ENCODE measurements at regions of chr6 and their contacts with region 1.

Region 1: DNA sequence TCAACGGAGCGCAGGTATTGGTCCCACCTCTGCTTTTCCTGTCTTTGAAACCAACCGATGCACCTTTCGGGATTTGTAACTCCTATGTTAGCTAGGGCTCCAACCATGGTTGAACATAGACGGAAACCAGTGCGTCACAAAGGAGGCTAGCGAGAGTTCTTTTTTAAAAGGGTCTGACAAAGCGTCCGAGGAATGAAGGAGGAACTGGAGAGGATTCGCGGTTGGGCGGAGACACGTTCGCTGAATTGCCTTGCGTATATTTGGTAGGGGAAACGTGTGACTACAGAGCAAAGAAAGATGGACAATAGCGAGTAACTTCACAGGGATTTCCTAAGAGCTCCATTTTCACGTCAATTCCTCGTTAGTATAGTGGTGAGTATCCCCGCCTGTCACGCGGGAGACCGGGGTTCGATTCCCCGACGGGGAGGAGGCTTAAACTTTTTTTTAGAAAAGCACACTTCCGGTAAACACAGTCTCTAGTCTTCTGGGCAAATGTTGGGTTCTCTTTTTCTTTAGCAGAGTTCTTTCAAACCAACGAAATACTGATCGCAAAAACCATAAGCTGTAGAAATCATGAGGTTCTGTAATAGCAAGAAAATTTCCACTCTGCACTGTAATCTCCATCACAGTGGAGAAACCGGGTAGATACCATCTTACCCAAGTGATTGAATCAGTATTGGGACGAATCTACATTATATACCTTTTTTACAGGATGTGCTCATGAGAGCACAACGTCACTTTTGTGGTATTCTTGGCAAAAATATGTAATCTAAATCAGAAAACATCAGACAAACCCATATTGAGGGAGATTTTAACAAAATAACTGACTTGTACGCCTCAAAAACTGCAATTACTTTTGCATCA is 6.6 kb upstream of the ZNF184 start:
- DNase-seq: peak; percentile 89
- H3K4me3 Mint-ChIP-seq: no peak overlapping the region
- H3K27ac Mint-ChIP-seq: no peak overlapping the region
- H3K4me1 Mint-ChIP-seq: peaks cover 5% of the 10 kb centered on the region
- H3K27me3 Mint-ChIP-seq: no peaks in the 10 kb centered on the region

Region 2: DNA sequence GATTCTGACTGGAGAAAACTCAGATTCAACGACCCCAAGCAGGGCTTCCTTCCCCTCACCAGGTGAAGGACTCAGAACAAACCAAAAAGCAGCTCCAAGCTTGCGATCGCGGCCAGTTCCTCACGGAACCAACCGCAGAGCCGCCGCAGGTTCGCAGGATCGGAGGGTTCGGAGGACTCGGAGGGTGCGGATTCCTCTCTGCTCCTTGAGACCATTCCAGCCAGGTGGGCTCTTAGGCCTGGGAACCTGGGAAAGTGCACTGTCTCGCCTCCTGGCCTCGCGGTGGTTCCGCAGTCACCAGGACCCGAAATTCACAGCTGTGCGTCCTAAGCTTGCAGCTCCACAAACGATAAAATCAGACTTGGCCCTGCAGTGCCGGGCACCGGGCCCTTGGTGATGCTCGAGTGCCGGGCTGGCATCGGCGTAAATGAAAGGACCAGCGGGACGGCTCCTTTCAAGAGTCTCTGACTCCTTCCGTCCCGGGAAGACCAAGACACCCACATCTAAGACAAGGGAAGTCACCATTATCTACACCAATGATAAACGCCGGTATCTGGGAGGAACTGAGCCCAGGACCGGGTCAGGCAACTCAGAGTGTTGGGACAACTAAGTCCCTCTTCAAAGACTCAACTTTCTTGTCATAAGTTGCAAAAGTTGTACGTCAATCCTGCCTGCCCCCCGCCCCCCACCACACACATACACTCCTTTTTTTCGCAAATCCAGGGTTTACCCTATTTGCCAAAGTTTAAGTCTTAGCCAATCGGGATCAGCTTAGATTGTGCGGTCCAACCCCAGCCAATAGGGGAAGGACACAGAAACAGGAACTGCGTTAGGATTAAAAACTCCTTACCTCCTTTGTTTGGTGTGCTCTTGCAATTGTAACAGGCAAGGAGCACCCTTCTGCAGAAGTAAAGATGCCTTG is 301.8 kb before region 1 on chr6:
- CTCF ChIA-PET with region 1: no interaction called
- POLR2A ChIA-PET with region 1: interaction called, 3 read pairs
- intact Hi-C with region 1: loop called (anchors 1 kb)
- DNase-seq: peak; percentile 84
- H3K4me3 Mint-ChIP-seq: peak overlapping the region; percentile 88
- H3K27ac Mint-ChIP-seq: peak overlapping the region; percentile 88
- H3K4me1 Mint-ChIP-seq: peaks cover 10% of the 10 kb centered on the region
- H3K27me3 Mint-ChIP-seq: peaks cover 1% of the 10 kb centered on the region

Region 3: DNA sequence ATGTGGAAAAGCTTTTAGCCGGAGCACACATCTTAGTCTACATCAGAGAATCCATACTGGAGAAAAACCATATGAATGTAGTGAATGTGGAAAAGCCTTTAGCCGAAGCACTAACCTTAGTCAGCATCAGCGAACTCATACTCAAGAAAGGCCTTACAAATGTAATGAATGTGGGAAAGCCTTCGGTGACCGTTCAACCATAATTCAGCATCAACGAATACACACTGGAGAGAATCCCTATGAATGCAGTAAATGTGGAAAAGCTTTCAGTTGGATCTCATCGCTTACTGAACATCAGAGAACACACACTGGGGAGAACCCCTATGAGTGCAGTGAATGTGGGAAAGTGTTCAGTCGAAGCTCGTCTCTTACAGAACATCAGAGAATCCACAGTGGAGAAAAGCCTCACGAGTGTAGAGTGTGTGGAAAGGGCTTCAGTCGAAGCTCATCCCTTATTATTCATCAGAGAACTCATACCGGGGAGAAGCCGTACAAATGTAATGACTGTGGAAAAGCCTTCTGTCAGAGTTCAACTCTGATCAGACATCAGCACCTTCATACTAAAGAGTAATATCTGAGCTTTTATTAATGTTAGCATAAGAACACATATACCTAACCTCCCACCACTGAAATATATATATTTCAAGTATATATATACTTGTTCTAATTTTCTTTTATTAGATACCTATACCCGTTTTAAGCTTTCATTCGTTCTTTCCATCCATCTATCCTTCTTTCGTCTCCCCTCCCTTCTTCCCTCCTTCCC is 78.5 kb before region 1 on chr6:
- CTCF ChIA-PET with region 1: no interaction called
- POLR2A ChIA-PET with region 1: no interaction called
- intact Hi-C with region 1: no loop called
- DNase-seq: no peak
- H3K4me3 Mint-ChIP-seq: no peak overlapping the region
- H3K27ac Mint-ChIP-seq: no peak overlapping the region
- H3K4me1 Mint-ChIP-seq: no peaks in the 10 kb centered on the region
- H3K27me3 Mint-ChIP-seq: no peaks in the 10 kb centered on the region

Region 4: GRCh38 chr6:27495386-27496135 is 16.0 kb after region 1 on chr6:
- CTCF ChIA-PET with region 1: interaction called, 5 read pairs
- POLR2A ChIA-PET with region 1: interaction called, 4 read pairs
- intact Hi-C with region 1: loop called (anchors 2 kb)
- DNase-seq: peak; percentile 87
- H3K4me3 Mint-ChIP-seq: peak overlapping the region; percentile 81
- H3K27ac Mint-ChIP-seq: peak overlapping the region; percentile 60
- H3K4me1 Mint-ChIP-seq: peaks cover 16% of the 10 kb centered on the region
- H3K27me3 Mint-ChIP-seq: peaks cover 43% of the 10 kb centered on the region

Region 5: DNA sequence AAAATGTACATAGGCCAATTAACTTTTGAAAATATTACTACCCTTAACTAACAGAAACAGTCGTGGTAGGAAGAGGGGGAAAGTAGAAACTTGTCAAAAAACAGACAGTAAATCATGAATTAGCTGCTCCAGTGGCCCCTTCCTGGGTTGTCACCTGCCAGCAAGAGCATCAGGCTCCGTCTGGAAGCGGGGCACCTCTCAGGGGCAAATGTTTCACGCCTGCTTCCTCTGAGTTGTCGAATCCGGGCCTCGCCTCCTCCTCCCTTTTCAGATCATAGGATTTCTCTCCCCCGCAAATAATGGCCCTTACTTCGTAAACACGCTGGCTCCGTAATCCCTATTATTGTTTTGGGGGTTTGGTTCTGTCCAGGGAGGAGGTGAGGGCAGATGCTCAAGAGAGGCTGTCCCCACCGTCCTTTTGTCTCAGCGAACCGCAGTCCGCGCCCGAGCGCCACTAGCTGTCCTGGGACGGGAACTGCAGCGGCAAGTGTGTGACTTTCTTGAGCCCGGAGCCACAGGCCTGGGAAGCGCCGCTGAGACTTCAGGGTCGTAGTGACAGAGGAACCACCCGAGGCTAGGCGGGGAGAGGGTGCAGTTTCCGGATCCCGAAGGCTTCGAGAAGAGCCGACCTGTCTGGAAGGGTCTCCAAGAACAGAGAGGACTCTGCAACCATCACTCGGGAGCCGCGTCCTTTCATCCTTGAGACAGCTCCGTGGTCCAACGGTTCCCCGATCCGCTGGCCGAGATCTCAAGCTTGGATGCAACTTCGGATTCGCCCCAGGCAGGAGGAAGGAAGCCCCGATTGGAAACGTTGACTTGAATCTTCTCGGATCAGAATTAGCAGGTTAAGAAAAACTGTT is 207.8 kb after region 1 on chr6:
- CTCF ChIA-PET with region 1: interaction called, 4 read pairs
- POLR2A ChIA-PET with region 1: no interaction called
- intact Hi-C with region 1: loop called (anchors 1 kb)
- DNase-seq: peak; percentile 90
- H3K4me3 Mint-ChIP-seq: peak overlapping the region; percentile 87
- H3K27ac Mint-ChIP-seq: peak overlapping the region; percentile 84
- H3K4me1 Mint-ChIP-seq: peaks cover 14% of the 10 kb centered on the region
- H3K27me3 Mint-ChIP-seq: peaks cover 15% of the 10 kb centered on the region

Region 6: DNA sequence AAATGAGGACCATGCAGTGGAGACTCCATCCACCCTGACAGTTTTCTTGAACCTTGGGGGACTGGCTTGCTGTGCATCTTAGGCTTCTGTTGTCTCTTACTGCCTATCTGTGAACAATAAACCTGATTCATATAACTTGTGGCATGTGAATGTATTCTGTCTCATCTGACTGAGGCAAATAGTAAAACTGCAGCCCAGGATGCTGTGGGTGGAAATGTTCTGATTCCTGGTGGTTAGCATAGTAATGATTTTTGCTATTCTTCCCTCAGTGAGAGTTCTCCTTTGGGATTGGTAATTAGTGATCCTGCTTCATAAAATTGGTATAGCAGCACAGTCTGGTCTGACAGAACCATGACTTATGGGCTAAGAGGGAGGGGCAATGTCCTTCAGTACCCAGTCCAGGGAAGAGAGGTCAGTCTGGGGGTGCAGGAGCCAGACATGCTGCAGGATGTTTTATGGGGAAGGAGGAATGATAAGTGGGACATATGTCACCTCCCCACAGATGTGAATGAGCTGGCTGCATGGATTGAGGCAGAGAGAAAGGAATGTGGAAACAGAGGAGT is 285.6 kb after region 1 on chr6:
- CTCF ChIA-PET with region 1: no interaction called
- POLR2A ChIA-PET with region 1: no interaction called
- intact Hi-C with region 1: no loop called
- DNase-seq: no peak
- H3K4me3 Mint-ChIP-seq: no peak overlapping the region
- H3K27ac Mint-ChIP-seq: no peak overlapping the region
- H3K4me1 Mint-ChIP-seq: peaks cover 14% of the 10 kb centered on the region
- H3K27me3 Mint-ChIP-seq: peaks cover 2% of the 10 kb centered on the region

Region 7: GRCh38 chr6:27838058-27838944 is 358.8 kb after region 1 on chr6:
- CTCF ChIA-PET with region 1: no interaction called
- POLR2A ChIA-PET with region 1: no interaction called
- intact Hi-C with region 1: loop called (anchors 1 kb)
- DNase-seq: peak; percentile 88
- H3K4me3 Mint-ChIP-seq: no peak overlapping the region
- H3K27ac Mint-ChIP-seq: no peak overlapping the region
- H3K4me1 Mint-ChIP-seq: peaks cover 22% of the 10 kb centered on the region
- H3K27me3 Mint-ChIP-seq: peaks cover 6% of the 10 kb centered on the region

Measured in activated CD4-positive, alpha-beta memory T cell treated with anti-CD3 and anti-CD28 coated beads for 36 hours (primary cell).